IMR-90 (cell line): ENCODE measurements at regions of chr17 and their contacts with region 1.

Region 1: GRCh38 chr17:82917691-82918345 is 78.0 kb upstream of the ZNF750 start:
- DNase-seq: peak; percentile 23
- ATAC-seq: no peak; the same call in 1 of the 2 replicates
- H3K4me3 ChIP-seq: no peak overlapping the region
- H3K27ac ChIP-seq: no peak overlapping the region
- H3K4me1 ChIP-seq: no peaks in the 10 kb centered on the region
- H3K27me3 ChIP-seq: no peaks in the 10 kb centered on the region
- CTCF ChIP-seq: peak; percentile 36; the same call in 1 of the 2 replicates
- POLR2A ChIP-seq: no peak
- RAD21 ChIP-seq: peak; percentile 48

Region 2: GRCh38 chr17:82876602-82877379 is 41.0 kb before region 1 on chr17:
- CTCF ChIA-PET with region 1: no interaction called
- POLR2A ChIA-PET with region 1: no interaction called
- dilution Hi-C with region 1: no loop called
- in situ Hi-C with region 1: no loop called
- intact Hi-C with region 1: loop called (anchors 1 kb)
- DNase-seq: peak; percentile 78
- ATAC-seq: peak; percentile 98
- H3K4me3 ChIP-seq: no peak overlapping the region
- H3K27ac ChIP-seq: no peak overlapping the region
- H3K4me1 ChIP-seq: peaks cover 5% of the 10 kb centered on the region; the same call in 1 of the 2 replicates
- H3K27me3 ChIP-seq: no peaks in the 10 kb centered on the region
- CTCF ChIP-seq: peak; percentile 59
- POLR2A ChIP-seq: no peak
- RAD21 ChIP-seq: peak; percentile 63